A549 (cell line): ENCODE measurements at regions of chr20 and their contacts with region 1.

Region 1: GRCh38 chr20:31723319-31724078 is 831 bp upstream of the BCL2L1 start:
- DNase-seq: peak; percentile 92 to 99
- ATAC-seq: peak; percentile 84 to 88
- H3K4me3 ChIP-seq: peak overlapping the region; percentile 68
- H3K27ac ChIP-seq: peak overlapping the region; percentile 95 to 96
- H3K4me1 ChIP-seq: peaks cover 10% of the 10 kb centered on the region
- CTCF ChIP-seq: peak; percentile 95
- EP300 ChIP-seq: 0 out of 5 replicates have a peak, but pooled peaks of 1 of the 2 experiments have one; percentile 15
- POLR2A ChIP-seq: peak; percentile 20; the same call in 1 of the 2 replicates
- RAD21 ChIP-seq: peak; percentile 97 to 98

Region 2: DNA sequence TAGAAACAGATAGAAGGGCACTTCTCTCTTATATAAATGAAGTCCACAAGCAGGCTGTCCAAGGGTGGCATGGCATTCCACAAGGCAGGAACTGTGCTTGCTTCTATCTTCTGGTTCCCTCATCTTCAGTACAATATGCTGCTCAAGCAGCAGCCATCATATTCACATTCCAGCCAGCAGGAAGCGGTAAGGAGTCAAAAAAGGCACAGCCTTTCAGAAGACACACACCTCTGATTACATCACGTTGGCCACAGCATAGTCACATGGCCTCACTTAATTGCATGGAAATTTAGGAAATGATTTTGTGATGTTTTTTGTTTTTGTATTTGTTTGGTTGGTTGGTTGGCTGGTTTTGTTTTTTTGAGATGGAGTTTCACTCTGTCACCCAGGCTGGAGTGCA is 229.4 kb before region 1 on chr20:
- CTCF ChIA-PET with region 1: no interaction called
- POLR2A ChIA-PET with region 1: no interaction called
- DNase-seq: peak; percentile 43 to 61
- ATAC-seq: peak; percentile 61 to 78; a peak in 4 of 6 replicates
- H3K4me3 ChIP-seq: no peak overlapping the region
- H3K27ac ChIP-seq: no peak overlapping the region
- H3K4me1 ChIP-seq: no peaks in the 10 kb centered on the region
- CTCF ChIP-seq: peak; percentile 21; the same call in 1 of the 3 replicates
- EP300 ChIP-seq: no peak
- POLR2A ChIP-seq: no peak
- RAD21 ChIP-seq: no peak

Region 3: GRCh38 chr20:31560094-31560899 is 163.2 kb before region 1 on chr20:
- CTCF ChIA-PET with region 1: interaction called, 26 read pairs
- POLR2A ChIA-PET with region 1: interaction called, 5 read pairs
- DNase-seq: peak; percentile 78 to 94
- ATAC-seq: peak; percentile 56 to 70
- H3K4me3 ChIP-seq: no peak overlapping the region
- H3K27ac ChIP-seq: peak overlapping the region; percentile 90 to 97
- H3K4me1 ChIP-seq: peaks cover 48% of the 10 kb centered on the region
- CTCF ChIP-seq: peak; percentile 95
- EP300 ChIP-seq: no peak
- POLR2A ChIP-seq: no peak
- RAD21 ChIP-seq: peak; percentile 65 to 66

Region 4: DNA sequence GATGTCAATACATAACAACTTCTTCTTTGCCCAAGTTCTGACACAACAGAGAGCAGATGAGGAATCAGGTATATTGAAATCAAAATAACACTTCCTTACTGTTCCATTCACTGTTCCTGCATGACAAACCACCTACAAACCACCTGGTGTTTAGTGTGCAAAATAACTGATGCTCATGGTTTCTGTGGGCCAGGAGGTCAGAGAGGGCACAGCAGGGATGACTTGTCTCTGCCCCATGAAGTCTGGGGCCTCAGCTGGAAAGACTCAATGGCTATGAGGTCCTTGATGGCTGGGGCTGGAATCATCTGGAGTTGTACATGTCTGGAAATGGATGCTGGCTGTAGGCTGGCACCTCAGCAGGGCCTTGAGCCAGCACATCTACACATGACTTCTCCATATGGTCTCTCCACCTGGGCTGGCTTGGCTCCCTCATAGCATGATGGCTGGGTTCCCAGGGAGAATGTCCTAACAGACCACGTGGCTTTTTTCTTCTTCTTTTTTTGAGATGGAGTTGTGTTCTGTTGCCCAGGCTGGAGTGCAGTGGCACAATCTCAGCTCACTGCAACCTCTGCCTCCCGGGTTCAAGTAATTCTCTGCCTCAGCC is 93.2 kb before region 1 on chr20:
- CTCF ChIA-PET with region 1: interaction called, 197 read pairs
- POLR2A ChIA-PET with region 1: interaction called, 18 read pairs
- DNase-seq: no peak
- ATAC-seq: no peak
- H3K4me3 ChIP-seq: no peak overlapping the region
- H3K27ac ChIP-seq: no peak overlapping the region
- H3K4me1 ChIP-seq: no peaks in the 10 kb centered on the region
- CTCF ChIP-seq: no peak
- EP300 ChIP-seq: no peak
- POLR2A ChIP-seq: no peak
- RAD21 ChIP-seq: no peak

Region 5: DNA sequence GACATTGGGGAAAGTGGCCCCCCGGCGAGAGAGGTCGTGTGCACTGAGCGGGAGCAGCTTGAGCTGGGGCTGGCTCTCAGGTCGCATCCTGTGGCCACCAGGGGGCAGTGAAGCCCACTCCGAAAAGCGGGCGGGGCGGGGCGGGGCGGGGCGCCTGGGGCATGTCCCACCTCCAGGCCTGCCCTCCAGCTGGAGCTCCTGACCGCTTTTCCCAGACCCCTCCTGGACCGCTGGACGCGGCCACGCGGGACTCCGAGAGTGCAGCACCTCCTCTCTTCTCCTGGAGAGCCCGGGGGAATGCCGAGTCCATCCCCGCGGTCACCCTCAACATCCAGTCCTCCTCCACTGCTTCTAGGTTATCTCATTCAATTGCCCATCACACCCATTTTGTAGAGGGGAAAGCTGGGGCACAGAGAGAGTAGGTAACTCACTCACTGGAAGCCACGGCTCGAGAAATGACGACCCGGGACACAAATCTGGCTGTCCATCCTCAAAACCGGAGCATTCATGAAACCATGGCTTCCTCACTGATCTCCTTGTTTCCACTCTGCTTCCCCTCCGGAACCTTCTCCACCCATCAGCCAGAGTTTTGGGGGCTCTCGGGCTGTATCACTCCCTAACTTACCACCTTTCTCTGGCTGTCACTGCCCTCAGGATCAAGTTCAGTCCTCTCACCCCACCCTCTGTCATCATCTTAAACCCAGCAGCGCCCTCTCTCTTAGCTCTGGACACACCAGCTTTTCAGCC is 61.7 kb before region 1 on chr20:
- CTCF ChIA-PET with region 1: interaction called, 489 read pairs
- POLR2A ChIA-PET with region 1: interaction called, 90 read pairs
- DNase-seq: peak; percentile 68 to 83
- ATAC-seq: peak; percentile 72 to 84
- H3K4me3 ChIP-seq: peak overlapping the region; percentile 32
- H3K27ac ChIP-seq: peak overlapping the region; percentile 85 to 88
- H3K4me1 ChIP-seq: peaks cover 60% of the 10 kb centered on the region
- CTCF ChIP-seq: peak; percentile 58
- EP300 ChIP-seq: no peak
- POLR2A ChIP-seq: peak; percentile 38
- RAD21 ChIP-seq: peak; percentile 64 to 85

Region 6: DNA sequence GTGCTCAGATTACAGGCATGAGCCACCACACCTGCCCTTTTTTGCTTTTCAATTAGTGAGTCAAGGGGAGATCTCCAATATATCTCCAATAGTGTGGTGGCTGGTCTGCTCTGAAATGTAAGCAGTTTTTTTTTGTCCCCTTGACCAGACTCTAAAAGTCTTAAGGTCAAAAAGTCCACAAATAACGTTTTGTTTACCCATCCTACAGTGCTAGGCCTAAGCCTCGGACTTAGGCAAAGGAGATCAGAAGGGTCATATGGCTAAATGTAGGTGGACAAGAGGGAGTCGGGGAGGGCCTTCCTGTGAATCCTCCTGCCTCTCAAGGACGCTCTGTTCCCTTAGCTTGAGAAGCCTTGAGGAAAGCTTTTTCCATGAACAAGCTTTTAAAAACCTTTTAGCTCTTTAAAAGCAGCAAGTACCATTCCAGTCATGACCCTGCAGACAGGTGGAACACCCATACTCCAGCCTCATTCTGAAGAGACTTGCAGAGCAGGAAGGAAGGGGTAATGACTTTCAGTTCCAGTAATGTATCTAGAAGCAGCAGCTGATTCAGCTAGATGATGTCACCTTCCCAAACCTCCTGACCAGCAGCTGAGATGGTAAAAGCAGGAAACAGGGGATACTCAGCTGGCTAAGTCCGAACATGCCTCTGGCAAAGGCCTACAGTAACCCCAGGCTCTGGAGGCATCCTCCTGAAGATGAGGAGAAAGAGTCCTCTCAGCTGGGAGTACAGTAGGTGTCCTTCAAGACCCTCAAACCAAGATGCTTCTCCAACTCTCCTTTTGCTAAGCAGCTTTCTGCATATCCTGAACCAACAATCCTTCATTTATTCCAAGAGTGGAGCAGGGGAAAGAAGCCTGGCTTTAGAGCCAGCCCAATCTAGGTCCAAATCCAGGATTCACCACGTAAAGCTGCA is 24.4 kb before region 1 on chr20:
- CTCF ChIA-PET with region 1: interaction called, 167 read pairs
- POLR2A ChIA-PET with region 1: interaction called, 30 read pairs
- DNase-seq: peak; percentile 63 to 87
- ATAC-seq: peak; percentile 59 to 74
- H3K4me3 ChIP-seq: no peak overlapping the region
- H3K27ac ChIP-seq: peak overlapping the region; percentile 89 to 95
- H3K4me1 ChIP-seq: peaks cover 100% of the 10 kb centered on the region
- CTCF ChIP-seq: no peak
- EP300 ChIP-seq: peak; percentile 39 to 58; a peak in 2 of 5 replicates
- POLR2A ChIP-seq: no peak
- RAD21 ChIP-seq: no peak

Region 7: GRCh38 chr20:31738729-31739561 is 15.4 kb after region 1 on chr20 and contains the start of gene TPX2:
- CTCF ChIA-PET with region 1: interaction called, 31 read pairs
- POLR2A ChIA-PET with region 1: interaction called, 21 read pairs
- DNase-seq: peak; percentile 97 to 99
- ATAC-seq: peak; percentile 99
- H3K4me3 ChIP-seq: peak within 1 kb of the TSS; percentile 57
- H3K27ac ChIP-seq: peak within 1 kb of the TSS; percentile 84 to 87
- H3K4me1 ChIP-seq: peaks cover 30% of the 10 kb centered on the region
- CTCF ChIP-seq: no peak
- EP300 ChIP-seq: no peak
- POLR2A ChIP-seq: peak; percentile 43; the same call in 1 of the 2 replicates
- RAD21 ChIP-seq: 0 out of 5 replicates have a peak, but pooled peaks of 1 of the 2 experiments have one; percentile 8
- polyA plus RNA-seq, gene TPX2: 79.4 and 92.9 TPM in 2 replicates